ENCODE measurements at regions of chr12 and their contacts with region 1.

Region 1: GRCh38 chr12:104582739-104583138 is 126.0 kb downstream of the CHST11 start:
- DNase-seq: no peak
- H3K4me3 Mint-ChIP-seq: no peak overlapping the region
- H3K27ac Mint-ChIP-seq: no peak overlapping the region
- H3K4me1 Mint-ChIP-seq: peaks cover 83% of the 10 kb centered on the region
- H3K27me3 Mint-ChIP-seq: no peaks in the 10 kb centered on the region

Region 2: GRCh38 chr12:104399740-104400612 is 182.8 kb before region 1 on chr12:
- intact Hi-C with region 1: no loop called
- DNase-seq: no peak
- H3K4me3 Mint-ChIP-seq: no peak overlapping the region
- H3K27ac Mint-ChIP-seq: no peak overlapping the region
- H3K4me1 Mint-ChIP-seq: peaks cover 12% of the 10 kb centered on the region
- H3K27me3 Mint-ChIP-seq: peaks cover 4% of the 10 kb centered on the region

Region 3: DNA sequence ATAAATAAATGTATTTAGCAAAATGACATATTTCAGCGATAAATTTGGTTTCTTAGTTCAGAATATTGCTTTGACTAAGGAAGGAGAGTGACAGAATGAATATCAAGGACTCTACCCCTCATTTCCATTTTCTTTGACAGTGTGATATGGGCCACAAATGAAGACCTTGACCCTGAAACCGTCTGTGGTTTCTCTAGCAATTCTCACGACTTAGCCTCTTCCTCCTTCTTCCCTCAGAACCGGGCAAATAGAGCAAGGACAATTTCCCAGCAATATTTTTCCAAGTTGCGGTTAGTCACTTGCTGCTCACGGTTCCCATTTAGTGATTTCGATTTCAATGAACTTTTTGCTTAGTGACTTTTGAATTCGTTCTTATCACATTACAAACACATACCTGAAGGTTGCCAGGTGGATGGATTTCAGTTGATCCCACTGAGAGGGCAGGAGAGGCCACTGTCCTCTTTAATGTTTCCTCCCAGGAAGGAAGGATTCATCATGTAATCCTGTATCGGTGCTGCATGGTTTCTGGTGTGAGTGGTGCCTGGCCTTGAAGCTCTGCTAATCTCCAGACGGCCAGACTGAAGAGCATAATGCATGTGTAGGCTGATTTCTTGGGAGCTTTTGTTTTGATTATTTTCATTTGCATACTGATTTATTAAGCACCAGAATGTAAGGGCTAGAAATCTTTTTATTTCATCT is 48.4 kb before region 1 on chr12:
- intact Hi-C with region 1: loop called (anchors 5 kb)
- DNase-seq: no peak
- H3K4me3 Mint-ChIP-seq: no peak overlapping the region
- H3K27ac Mint-ChIP-seq: peak overlapping the region; percentile 15
- H3K4me1 Mint-ChIP-seq: peaks cover 87% of the 10 kb centered on the region
- H3K27me3 Mint-ChIP-seq: no peaks in the 10 kb centered on the region

Region 4: GRCh38 chr12:104569346-104570173 is 13.2 kb before region 1 on chr12:
- intact Hi-C with region 1: loop called (anchors 1 kb)
- DNase-seq: peak; percentile 58
- H3K4me3 Mint-ChIP-seq: peak overlapping the region; percentile 64
- H3K27ac Mint-ChIP-seq: peak overlapping the region; percentile 89
- H3K4me1 Mint-ChIP-seq: peaks cover 63% of the 10 kb centered on the region
- H3K27me3 Mint-ChIP-seq: no peaks in the 10 kb centered on the region

Region 5: GRCh38 chr12:104604070-104604994 is 21.6 kb after region 1 on chr12:
- intact Hi-C with region 1: loop called (anchors 2 kb)
- DNase-seq: peak; percentile 34
- H3K4me3 Mint-ChIP-seq: peak overlapping the region; percentile 62
- H3K27ac Mint-ChIP-seq: peak overlapping the region; percentile 88
- H3K4me1 Mint-ChIP-seq: peaks cover 66% of the 10 kb centered on the region
- H3K27me3 Mint-ChIP-seq: no peaks in the 10 kb centered on the region